Activated CD4-positive, alpha-beta memory T cell treated with anti-CD3 and anti-CD28 coated beads for 36 hours (primary cell): ENCODE measurements at regions of chrX and their contacts with region 1.

Region 1: GRCh38 chrX:13387666-13388494 is 68.0 kb upstream of the ATXN3L start:
- DNase-seq: peak; percentile 34
- H3K4me3 Mint-ChIP-seq: no peak overlapping the region
- H3K27ac Mint-ChIP-seq: no peak overlapping the region
- H3K4me1 Mint-ChIP-seq: peaks cover 8% of the 10 kb centered on the region
- H3K27me3 Mint-ChIP-seq: no peaks in the 10 kb centered on the region

Region 2: GRCh38 chrX:13418126-13419097 is 30.5 kb after region 1 on chrX:
- CTCF ChIA-PET with region 1: no interaction called
- POLR2A ChIA-PET with region 1: no interaction called
- intact Hi-C with region 1: loop called (anchors 2 kb)
- DNase-seq: no peak
- H3K4me3 Mint-ChIP-seq: no peak overlapping the region
- H3K27ac Mint-ChIP-seq: no peak overlapping the region
- H3K4me1 Mint-ChIP-seq: peaks cover 10% of the 10 kb centered on the region
- H3K27me3 Mint-ChIP-seq: no peaks in the 10 kb centered on the region